ENCODE measurements at regions of chr12 and their contacts with region 1.

Region 1: GRCh38 chr12:62866451-62867082 is 68.4 kb downstream of the PPM1H start:
- DNase-seq: peak; percentile 65
- H3K4me3 ChIP-seq: no peak overlapping the region
- H3K27ac ChIP-seq: peak overlapping the region; percentile 74
- H3K4me1 ChIP-seq: peaks cover 36% of the 10 kb centered on the region
- H3K27me3 ChIP-seq: no peaks in the 10 kb centered on the region
- CTCF ChIP-seq: no peak
- POLR2A ChIP-seq: no peak

Region 2: GRCh38 chr12:62259993-62260732 is 606.4 kb before region 1 on chr12 and contains the start of gene USP15:
- CTCF ChIA-PET with region 1: no interaction called
- POLR2A ChIA-PET with region 1: no interaction called
- dilution Hi-C with region 1: no loop called
- intact Hi-C with region 1: loop called (anchors 5 kb)
- DNase-seq: peak; percentile 97
- H3K4me3 ChIP-seq: peak within 1 kb of the TSS; percentile 65 to 97 (median 93)
- H3K27ac ChIP-seq: peak within 1 kb of the TSS; percentile 71
- H3K4me1 ChIP-seq: peaks cover 19% of the 10 kb centered on the region
- H3K27me3 ChIP-seq: no peaks in the 10 kb centered on the region
- CTCF ChIP-seq: peak; percentile 84 to 96
- POLR2A ChIP-seq: peak; percentile 78
- total RNA-seq, gene USP15: 61.8 and 66.2 TPM in 2 replicates

Region 3: DNA sequence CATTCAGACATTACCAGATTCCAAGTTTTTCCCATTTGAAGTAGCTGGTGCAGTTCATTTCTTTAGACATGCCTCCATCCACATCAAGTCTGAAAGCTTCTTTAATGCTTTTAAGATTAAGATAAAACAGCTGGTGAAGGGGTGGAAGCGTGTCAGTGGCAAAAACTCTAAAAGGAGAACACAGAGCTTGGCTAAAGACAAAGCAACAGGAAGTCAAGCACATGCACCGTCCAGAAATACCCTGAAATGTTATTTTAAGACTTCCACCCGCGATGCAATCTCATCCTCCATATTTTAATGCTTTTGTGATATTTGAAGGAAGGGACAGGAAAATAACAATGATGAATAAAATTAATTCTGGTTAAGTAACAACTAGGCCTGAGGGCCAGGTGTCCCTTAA is 36.6 kb after region 1 on chr12:
- CTCF ChIA-PET with region 1: no interaction called
- POLR2A ChIA-PET with region 1: no interaction called
- dilution Hi-C with region 1: no loop called
- intact Hi-C with region 1: loop called (anchors 1 kb)
- DNase-seq: peak; percentile 94
- H3K4me3 ChIP-seq: no peak overlapping the region
- H3K27ac ChIP-seq: peak overlapping the region; percentile 64
- H3K4me1 ChIP-seq: peaks cover 11% of the 10 kb centered on the region
- H3K27me3 ChIP-seq: peaks cover 0 to 3% of the 10 kb centered on the region in 2 experiments
- CTCF ChIP-seq: no peak
- POLR2A ChIP-seq: no peak

Measured in endothelial cell of umbilical vein (primary cell).